Heart left ventricle (tissue), 16 donors: ENCODE measurements at regions of chr5 and their contacts with region 1.

Region 1: DNA sequence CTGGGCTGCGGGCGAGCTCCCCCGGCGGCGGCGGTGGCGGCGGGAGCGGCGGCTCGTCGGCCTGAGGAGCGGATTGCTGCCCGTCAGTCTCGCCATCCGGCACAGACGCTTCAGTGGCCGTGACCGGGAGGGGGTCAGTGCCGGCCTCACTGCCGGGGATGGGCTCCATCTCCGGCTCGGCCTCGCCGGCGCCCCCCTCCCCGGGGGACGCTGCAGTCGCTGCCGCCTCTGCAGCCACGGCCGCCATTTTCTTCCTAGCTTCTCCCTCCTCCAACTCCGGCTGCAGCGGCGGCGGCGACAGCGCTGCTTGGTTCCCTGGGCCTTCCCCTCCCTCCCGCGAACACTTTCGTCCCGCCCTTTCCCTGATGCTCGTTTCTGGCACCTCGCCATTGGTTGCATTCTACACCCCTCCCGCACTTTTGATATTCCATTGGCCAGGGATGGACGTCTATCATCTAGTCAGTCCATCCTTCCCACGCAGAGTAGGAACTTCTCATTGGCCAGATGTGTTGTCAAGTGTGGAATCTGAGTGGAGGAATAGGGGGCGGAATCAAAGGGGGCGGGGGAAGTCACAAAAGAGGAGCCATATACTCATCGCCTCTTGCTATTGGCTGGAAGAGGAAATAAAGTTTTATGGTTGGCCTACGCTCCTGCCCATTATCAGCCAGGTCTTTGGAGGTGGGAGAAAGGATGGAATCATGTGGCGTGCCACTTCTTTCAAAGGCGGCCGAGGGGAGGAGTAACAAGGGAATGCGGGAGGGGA is at the start of gene PWWP2A:
- DNase-seq: peak; percentile 98 to 100 (median 99)
- ATAC-seq: peak; percentile 97 to 99 (median 98)
- H3K4me3 ChIP-seq: peak within 1 kb of the TSS; percentile 75 to 100 (median 98)
- H3K27ac ChIP-seq: peak within 1 kb of the TSS; percentile 86 to 100 (median 98)
- H3K4me1 ChIP-seq: peaks cover 0 to 20% (median 8%) of the 10 kb centered on the region in 12 donors
- H3K27me3 ChIP-seq: no peaks in the 10 kb centered on the region
- CTCF ChIP-seq: peak in 6 of 12 donors; percentile 9 to 46 (median 26)
- POLR2A ChIP-seq: peak in 1 of 2 donors; percentile 83
- total RNA-seq, gene PWWP2A: 9.3 to 13.7 (median 11.2) TPM

Region 2: GRCh38 chr5:160030631-160031377 is 88.5 kb before region 1 on chr5:
- intact Hi-C with region 1: loop called in 2 of 10 experiments (anchors 10 kb)
- DNase-seq: no peak
- ATAC-seq: peak in 2 of 4 donors; percentile 10 to 38
- H3K4me3 ChIP-seq: no peak overlapping the region
- H3K27ac ChIP-seq: peak overlapping the region in 3 of 12 donors; percentile 5 to 36 (median 30)
- H3K4me1 ChIP-seq: peaks cover 0 to 45% (median 20%) of the 10 kb centered on the region in 12 donors
- H3K27me3 ChIP-seq: no peaks in the 10 kb centered on the region
- CTCF ChIP-seq: no peak
- POLR2A ChIP-seq: no peak

Region 3: GRCh38 chr5:160064995-160065630 is 54.2 kb before region 1 on chr5:
- intact Hi-C with region 1: no loop called
- DNase-seq: no peak
- ATAC-seq: no peak
- H3K4me3 ChIP-seq: no peak overlapping the region
- H3K27ac ChIP-seq: peak overlapping the region in 1 of 12 donors; percentile 16
- H3K4me1 ChIP-seq: peaks cover 0 to 13% (median 0%) of the 10 kb centered on the region in 12 donors
- H3K27me3 ChIP-seq: no peaks in the 10 kb centered on the region
- CTCF ChIP-seq: no peak
- POLR2A ChIP-seq: no peak

Region 4: DNA sequence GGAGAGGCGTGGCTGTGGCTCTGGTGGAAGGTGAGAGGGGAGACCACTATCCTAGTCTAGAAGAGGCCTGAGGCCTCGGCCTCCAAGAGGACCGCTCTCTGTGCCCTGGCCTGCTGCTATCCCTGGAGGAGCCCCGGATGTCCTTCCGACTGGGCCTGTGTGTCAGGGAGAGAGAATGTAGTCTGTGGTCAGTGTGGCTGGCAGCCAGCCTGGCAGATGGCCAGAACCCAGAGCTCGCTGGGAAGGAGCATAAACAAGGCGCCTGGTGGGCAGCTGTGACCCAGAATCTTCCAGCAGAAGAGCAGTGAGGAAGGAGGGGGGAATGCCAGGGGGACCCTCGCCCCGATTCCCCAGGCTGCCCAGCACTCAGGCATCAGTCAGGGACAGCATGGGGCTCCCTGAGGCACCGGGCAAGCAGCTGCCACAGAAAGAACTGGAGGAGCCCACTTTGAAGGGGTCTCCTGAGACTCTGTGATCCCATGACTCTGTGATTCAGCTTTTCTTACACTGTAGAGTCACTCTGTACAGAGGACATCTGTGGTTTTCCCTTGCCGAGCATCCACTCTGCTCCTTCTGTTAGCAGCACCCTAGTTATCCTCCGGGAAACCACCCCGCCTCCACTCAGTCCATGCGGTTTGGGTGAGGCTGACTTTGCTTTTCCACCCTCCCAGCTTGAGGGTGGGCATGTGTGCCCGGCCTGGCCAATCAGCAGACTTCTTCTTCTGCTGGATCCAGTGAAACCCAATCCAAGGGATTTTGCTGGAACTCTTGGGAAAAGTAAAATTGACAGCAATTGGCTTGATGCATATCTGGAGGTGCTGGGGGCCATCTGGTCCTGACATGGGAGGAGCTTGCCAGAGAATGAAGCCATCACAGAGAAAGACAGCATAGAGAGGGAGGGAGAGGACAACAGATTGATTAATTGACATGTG is 46.1 kb after region 1 on chr5:
- intact Hi-C with region 1: loop called in 1 of 10 experiments (anchors 1 kb)
- DNase-seq: peak; percentile 87 to 94 (median 93)
- ATAC-seq: peak; percentile 85 to 92 (median 90)
- H3K4me3 ChIP-seq: peak overlapping the region in 1 of 12 donors; percentile 0
- H3K27ac ChIP-seq: peak overlapping the region; percentile 47 to 92 (median 80)
- H3K4me1 ChIP-seq: peaks cover 0 to 41% (median 29%) of the 10 kb centered on the region in 12 donors
- H3K27me3 ChIP-seq: no peaks in the 10 kb centered on the region
- CTCF ChIP-seq: no peak
- POLR2A ChIP-seq: no peak

Region 5: DNA sequence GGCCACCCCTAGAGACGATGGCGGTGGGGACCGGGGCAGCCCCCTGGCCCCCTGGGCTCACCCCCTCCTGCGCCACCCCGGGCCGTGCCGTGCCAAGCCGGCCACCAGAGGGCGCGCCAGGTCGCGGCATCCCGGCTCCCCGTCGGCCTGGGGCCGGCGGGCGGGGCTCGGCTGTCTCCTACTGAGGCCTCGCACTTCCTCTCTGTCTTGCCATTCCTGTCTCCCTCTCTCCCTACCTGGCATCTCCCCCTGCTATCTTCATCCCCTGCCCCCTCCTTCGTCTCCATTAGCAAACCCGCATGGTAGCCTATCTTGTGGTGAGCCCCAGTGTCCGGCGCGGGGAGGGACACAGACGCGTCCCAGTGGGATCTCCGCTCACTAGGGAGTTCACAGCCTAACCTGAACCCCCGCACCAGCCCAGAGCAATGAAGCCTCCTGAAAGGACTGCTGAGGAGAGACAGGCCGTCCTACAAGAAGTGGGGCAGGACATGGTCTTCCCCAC is 80.1 kb after region 1 on chr5:
- intact Hi-C with region 1: loop called in 2 of 10 experiments (anchors 10 kb)
- DNase-seq: peak; percentile 66 to 89 (median 79)
- ATAC-seq: peak; percentile 74 to 98 (median 92)
- H3K4me3 ChIP-seq: peak overlapping the region in 11 of 12 donors; percentile 22 to 57 (median 45)
- H3K27ac ChIP-seq: peak overlapping the region in 2 of 12 donors; percentile 24 to 38
- H3K4me1 ChIP-seq: peaks cover 0 to 25% (median 16%) of the 10 kb centered on the region in 12 donors
- H3K27me3 ChIP-seq: no peaks in the 10 kb centered on the region
- CTCF ChIP-seq: peak; percentile 85 to 98 (median 96)
- POLR2A ChIP-seq: no peak

Region 6: GRCh38 chr5:160399402-160400353 is 280.4 kb after region 1 on chr5 and contains the start of gene FAM200C:
- intact Hi-C with region 1: loop called in 1 of 10 experiments (anchors 10 kb)
- DNase-seq: peak; percentile 92 to 96 (median 95)
- ATAC-seq: peak; percentile 96 to 99 (median 98)
- H3K4me3 ChIP-seq: peak within 1 kb of the TSS; percentile 36 to 89 (median 72)
- H3K27ac ChIP-seq: peak within 1 kb of the TSS; percentile 56 to 91 (median 86)
- H3K4me1 ChIP-seq: peaks cover 0 to 32% (median 28%) of the 10 kb centered on the region in 12 donors
- H3K27me3 ChIP-seq: no peaks in the 10 kb centered on the region
- CTCF ChIP-seq: no peak
- POLR2A ChIP-seq: peak in 1 of 2 donors; percentile 95
- total RNA-seq, gene FAM200C: 2.2 to 5.0 (median 3.4) TPM